ENCODE measurements at regions of chr1 and their contacts with region 1.

Region 1: DNA sequence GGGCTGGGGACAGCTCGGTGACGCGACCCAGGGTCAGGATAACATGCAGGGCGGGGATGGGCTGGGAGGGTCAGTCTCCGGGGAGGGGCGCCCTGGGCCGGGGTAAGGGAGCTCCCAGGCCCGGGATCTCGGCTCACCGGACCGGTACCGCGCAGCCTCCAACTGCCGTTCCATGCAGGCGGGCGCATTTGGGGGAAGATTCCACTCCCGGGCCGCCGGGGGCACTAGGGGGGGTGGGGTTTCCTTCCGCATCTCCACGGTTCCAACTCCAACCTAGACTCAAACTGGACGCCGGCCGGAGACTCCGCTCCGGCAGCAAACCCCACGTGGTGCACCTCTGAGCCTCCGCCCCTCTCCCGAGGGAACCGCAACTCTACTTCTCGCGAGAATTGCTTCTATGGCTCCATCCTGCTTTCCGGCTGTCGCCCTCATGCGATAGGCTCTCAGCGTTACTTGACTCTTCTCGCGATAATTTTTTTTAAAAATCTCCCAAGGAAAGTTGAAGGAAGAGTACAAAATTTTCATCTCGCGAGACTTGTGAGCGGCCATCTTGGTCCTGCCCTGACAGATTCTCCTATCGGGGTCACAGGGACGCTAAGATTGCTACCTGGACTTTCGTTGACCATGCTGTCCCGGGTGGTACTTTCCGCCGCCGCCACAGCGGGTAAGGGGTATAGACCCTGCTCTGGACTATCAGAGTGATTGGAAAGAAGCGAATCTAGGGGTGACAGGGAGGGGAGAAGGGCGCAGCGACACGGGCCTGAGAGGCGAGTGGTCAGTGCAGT is at the starts of genes ATP5PB and WDR77:
- H3K4me3 Mint-ChIP-seq: peak within 1 kb of the TSS; percentile 100
- H3K27ac Mint-ChIP-seq: peak within 1 kb of the TSS; percentile 98
- H3K4me1 Mint-ChIP-seq: peaks cover 48% of the 10 kb centered on the region
- H3K27me3 Mint-ChIP-seq: no peaks in the 10 kb centered on the region

Region 2: GRCh38 chr1:111461765-111462164 is 12.7 kb after region 1 on chr1:
- intact Hi-C with region 1: loop called (anchors 2 kb)
- H3K4me3 Mint-ChIP-seq: no peak overlapping the region
- H3K27ac Mint-ChIP-seq: no peak overlapping the region
- H3K4me1 Mint-ChIP-seq: peaks cover 18% of the 10 kb centered on the region
- H3K27me3 Mint-ChIP-seq: no peaks in the 10 kb centered on the region

Region 3: GRCh38 chr1:111471012-111471411 is 21.9 kb after region 1 on chr1:
- intact Hi-C with region 1: loop called (anchors 2 kb)
- H3K4me3 Mint-ChIP-seq: no peak overlapping the region
- H3K27ac Mint-ChIP-seq: no peak overlapping the region
- H3K4me1 Mint-ChIP-seq: peaks cover 18% of the 10 kb centered on the region
- H3K27me3 Mint-ChIP-seq: no peaks in the 10 kb centered on the region

Region 4: DNA sequence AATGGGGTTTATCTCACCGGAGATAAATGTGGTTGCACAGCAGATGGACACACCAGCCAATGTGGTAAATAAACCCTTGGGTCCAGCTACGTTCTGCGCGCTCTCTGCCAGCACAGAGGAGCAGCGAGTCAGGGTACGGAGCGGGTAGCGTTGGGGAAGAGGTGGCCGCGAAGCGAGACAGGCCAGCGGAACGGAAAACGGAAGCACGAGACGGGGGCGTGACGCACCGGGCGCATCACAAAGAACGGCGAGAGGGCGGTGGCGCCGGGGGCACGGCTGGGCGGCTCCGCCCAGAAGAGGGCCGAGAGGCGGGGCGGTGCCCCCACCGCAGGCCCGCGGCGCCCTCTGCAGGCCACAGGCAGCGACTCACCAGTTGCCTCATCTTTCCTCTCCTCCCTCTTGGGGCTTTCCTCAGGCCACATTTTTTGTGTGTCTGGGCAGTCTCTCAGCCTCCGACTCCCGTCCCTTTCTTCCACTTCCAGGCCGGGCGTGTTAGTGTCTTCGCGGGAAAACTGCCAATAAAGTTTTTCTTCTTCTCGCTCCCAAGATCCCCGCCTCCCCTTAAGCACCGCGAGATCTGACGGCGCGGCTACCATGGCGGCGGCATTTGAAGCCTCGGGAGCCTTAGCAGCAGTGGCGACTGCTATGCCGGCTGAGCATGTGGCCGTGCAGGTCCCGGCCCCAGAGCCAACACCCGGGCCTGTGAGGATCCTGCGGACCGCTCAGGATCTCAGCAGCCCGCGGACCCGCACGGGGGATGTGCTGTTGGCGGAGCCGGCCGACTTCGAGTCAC is 306.4 kb after region 1 on chr1 and contains the start of gene DDX20:
- intact Hi-C with region 1: loop called (anchors 1 kb)
- H3K4me3 Mint-ChIP-seq: peak within 1 kb of the TSS; percentile 95
- H3K27ac Mint-ChIP-seq: peak within 1 kb of the TSS; percentile 94
- H3K4me1 Mint-ChIP-seq: peaks cover 41% of the 10 kb centered on the region
- H3K27me3 Mint-ChIP-seq: no peaks in the 10 kb centered on the region

Measured in dendritic cell treated with granulocyte-macrophage colony-stimulating factor and Interleukin-4, amounts not matched to agents 40 ng/mL and 50 ng/mL, for 4 days (primary cell).